Ascending aorta (tissue), 2 donors: ENCODE measurements at regions of chrX and their contacts with region 1.

Region 1: GRCh38 chrX:109714340-109714958 is 18.6 kb downstream of the ACSL4 start:
- DNase-seq: no peak
- H3K4me3 ChIP-seq: no peak overlapping the region
- H3K27ac ChIP-seq: no peak overlapping the region
- H3K4me1 ChIP-seq: peaks cover 0 to 2% of the 10 kb centered on the region in 2 donors
- H3K27me3 ChIP-seq: no peaks in the 10 kb centered on the region
- CTCF ChIP-seq: no peak

Region 2: GRCh38 chrX:109856974-109857373 is 142.5 kb after region 1 on chrX:
- intact Hi-C with region 1: loop called (anchors 5 kb)
- DNase-seq: no peak
- H3K4me3 ChIP-seq: peak overlapping the region in 1 of 2 donors; percentile 32
- H3K27ac ChIP-seq: no peak overlapping the region
- H3K4me1 ChIP-seq: peaks cover 0 to 3% of the 10 kb centered on the region in 2 donors
- H3K27me3 ChIP-seq: no peaks in the 10 kb centered on the region
- CTCF ChIP-seq: peak; percentile 62 to 86 (median 81)

Region 3: DNA sequence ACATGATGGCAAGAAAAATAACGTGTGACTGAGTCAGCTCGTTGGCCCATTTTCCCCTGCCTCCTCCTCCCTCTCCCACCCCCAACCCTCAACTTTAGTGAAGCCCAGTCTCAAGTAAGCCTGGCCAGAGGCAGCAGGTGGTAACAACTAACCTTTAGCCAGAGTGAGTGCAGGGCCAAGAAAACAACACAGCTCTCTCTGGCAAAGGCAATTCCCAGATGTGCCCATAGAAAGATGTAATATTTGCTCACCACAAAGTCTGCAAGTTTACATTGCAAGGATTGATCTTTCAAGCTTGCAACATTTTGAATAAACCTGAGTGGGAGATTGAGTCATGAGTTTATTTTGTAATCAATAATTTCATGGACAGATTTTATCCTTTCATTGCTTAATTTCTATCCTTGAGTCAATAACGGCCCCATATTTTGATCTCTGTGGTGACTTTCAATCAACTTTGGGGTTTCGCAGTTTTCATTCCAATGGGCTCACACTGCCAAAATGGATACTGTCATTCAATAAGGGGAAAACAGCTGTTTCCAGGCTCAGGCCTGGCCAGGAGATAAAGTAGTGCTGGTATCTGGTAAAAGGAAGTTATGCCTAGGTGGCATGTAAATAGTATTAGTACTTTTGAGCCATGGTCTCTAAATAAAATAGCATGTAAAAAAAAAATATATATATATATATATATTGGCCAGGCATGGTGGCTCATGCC is 157.7 kb after region 1 on chrX:
- intact Hi-C with region 1: no loop called
- DNase-seq: no peak
- H3K4me3 ChIP-seq: no peak overlapping the region
- H3K27ac ChIP-seq: no peak overlapping the region
- H3K4me1 ChIP-seq: no peaks in the 10 kb centered on the region
- H3K27me3 ChIP-seq: no peaks in the 10 kb centered on the region
- CTCF ChIP-seq: no peak

Region 4: GRCh38 chrX:109890895-109891502 is 176.6 kb after region 1 on chrX:
- intact Hi-C with region 1: loop called (anchors 2 kb)
- DNase-seq: peak in 1 of 2 donors; percentile 70
- H3K4me3 ChIP-seq: no peak overlapping the region
- H3K27ac ChIP-seq: no peak overlapping the region
- H3K4me1 ChIP-seq: no peaks in the 10 kb centered on the region
- H3K27me3 ChIP-seq: no peaks in the 10 kb centered on the region
- CTCF ChIP-seq: peak; percentile 47 to 85 (median 84)

Region 5: GRCh38 chrX:110863883-110864282 is 1149.4 kb after region 1 on chrX:
- intact Hi-C with region 1: no loop called
- DNase-seq: no peak
- H3K4me3 ChIP-seq: no peak overlapping the region
- H3K27ac ChIP-seq: no peak overlapping the region
- H3K4me1 ChIP-seq: no peaks in the 10 kb centered on the region
- H3K27me3 ChIP-seq: no peaks in the 10 kb centered on the region
- CTCF ChIP-seq: no peak